MCF 10A (cell line): ENCODE measurements at regions of chr3 and their contacts with region 1.

Region 1: GRCh38 chr3:81419228-81419627 is 342.2 kb downstream of the GBE1 start:
- DNase-seq: peak; percentile 9
- H3K4me3 Mint-ChIP-seq: no peak overlapping the region
- H3K27ac Mint-ChIP-seq: no peak overlapping the region
- H3K4me1 Mint-ChIP-seq: no peaks in the 10 kb centered on the region
- H3K27me3 Mint-ChIP-seq: no peaks in the 10 kb centered on the region
- CTCF ChIP-seq: peak; percentile 27

Region 2: GRCh38 chr3:81198756-81199155 is 220.5 kb before region 1 on chr3:
- CTCF ChIA-PET with region 1: no interaction called
- POLR2A ChIA-PET with region 1: no interaction called
- intact Hi-C with region 1: no loop called
- DNase-seq: no peak
- H3K4me3 Mint-ChIP-seq: no peak overlapping the region
- H3K27ac Mint-ChIP-seq: no peak overlapping the region
- H3K4me1 Mint-ChIP-seq: no peaks in the 10 kb centered on the region
- H3K27me3 Mint-ChIP-seq: peaks cover 61% of the 10 kb centered on the region
- CTCF ChIP-seq: no peak

Region 3: DNA sequence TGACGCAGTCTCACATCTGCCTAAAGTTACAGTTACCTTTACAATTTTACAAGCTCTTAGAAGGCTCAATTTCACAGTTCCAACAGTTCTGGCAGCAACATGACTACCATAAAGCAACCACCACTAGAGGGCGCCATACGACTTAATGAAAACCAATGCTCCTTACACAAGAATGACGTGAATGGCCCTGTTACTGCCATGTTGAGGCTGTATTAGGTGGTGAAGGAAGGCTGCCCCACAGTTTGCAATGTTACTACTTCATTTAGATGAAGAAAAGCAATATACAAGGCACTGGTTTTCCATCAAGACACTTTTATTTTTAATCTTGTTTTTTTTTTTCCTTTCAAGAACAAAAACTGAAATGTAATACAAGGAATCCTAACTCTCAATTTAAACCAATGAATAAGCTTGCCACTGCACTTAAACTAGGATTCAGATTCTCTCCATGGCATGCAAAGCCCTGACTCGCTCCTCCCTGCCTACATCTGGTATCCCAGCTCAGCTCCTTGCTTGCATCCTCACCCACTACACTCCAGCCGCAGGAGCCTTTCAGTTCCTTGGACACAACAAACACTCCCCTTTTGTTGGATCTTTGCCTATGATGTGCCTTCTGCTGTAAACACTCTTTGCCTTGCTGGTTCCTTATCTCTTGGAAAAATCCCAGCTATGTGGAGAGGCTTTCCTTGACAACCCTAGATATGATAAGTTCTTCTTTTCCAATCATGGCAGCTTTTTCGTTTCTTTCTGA is 71.5 kb after region 1 on chr3:
- CTCF ChIA-PET with region 1: interaction called, 12 read pairs
- POLR2A ChIA-PET with region 1: no interaction called
- intact Hi-C with region 1: no loop called
- DNase-seq: peak; percentile 88
- H3K4me3 Mint-ChIP-seq: no peak overlapping the region
- H3K27ac Mint-ChIP-seq: peak overlapping the region; percentile 16
- H3K4me1 Mint-ChIP-seq: peaks cover 7% of the 10 kb centered on the region
- H3K27me3 Mint-ChIP-seq: no peaks in the 10 kb centered on the region
- CTCF ChIP-seq: peak; percentile 73

Region 4: DNA sequence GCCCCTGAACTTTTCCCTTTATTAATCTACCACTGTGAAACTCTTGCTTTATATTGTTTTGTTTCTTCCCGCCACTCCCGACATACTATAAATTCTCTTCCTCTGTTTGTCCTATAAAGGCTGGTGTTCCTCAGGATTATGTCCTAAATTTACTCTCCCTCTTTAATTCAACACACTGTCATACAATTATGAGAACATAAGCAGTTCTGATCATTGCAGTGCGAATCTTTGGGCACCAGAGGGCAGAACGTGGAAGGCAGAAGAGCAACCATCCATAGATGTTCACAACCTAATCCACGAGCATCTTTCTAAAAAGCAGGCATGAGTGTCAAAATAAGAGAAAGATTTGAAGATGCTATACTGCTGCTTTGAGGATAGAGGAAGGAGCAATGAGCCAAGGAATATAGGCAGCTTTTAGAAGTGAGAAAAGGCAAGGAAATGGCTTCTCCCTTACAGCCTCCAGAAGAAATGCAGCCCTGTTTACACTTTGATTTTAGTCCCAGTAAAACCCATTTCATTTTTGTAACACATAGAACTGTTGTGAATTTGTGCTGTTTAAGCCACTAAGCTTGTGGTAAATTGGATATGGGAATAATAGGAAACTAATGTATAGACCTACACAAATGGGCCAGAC is 162.9 kb after region 1 on chr3:
- CTCF ChIA-PET with region 1: interaction called, 6 read pairs
- POLR2A ChIA-PET with region 1: no interaction called
- intact Hi-C with region 1: loop called (anchors 5 kb)
- DNase-seq: peak; percentile 55
- H3K4me3 Mint-ChIP-seq: no peak overlapping the region
- H3K27ac Mint-ChIP-seq: no peak overlapping the region
- H3K4me1 Mint-ChIP-seq: peaks cover 6% of the 10 kb centered on the region
- H3K27me3 Mint-ChIP-seq: no peaks in the 10 kb centered on the region
- CTCF ChIP-seq: peak; percentile 58

Region 5: GRCh38 chr3:81643721-81644120 is 224.5 kb after region 1 on chr3:
- CTCF ChIA-PET with region 1: interaction called, 4 read pairs
- POLR2A ChIA-PET with region 1: no interaction called
- intact Hi-C with region 1: loop called (anchors 5 kb)
- DNase-seq: peak; percentile 38
- H3K4me3 Mint-ChIP-seq: no peak overlapping the region
- H3K27ac Mint-ChIP-seq: no peak overlapping the region
- H3K4me1 Mint-ChIP-seq: no peaks in the 10 kb centered on the region
- H3K27me3 Mint-ChIP-seq: no peaks in the 10 kb centered on the region
- CTCF ChIP-seq: peak; percentile 17